Sigmoid colon (tissue), 7 donors: ENCODE measurements at regions of chr9 and their contacts with region 1.

Region 1: DNA sequence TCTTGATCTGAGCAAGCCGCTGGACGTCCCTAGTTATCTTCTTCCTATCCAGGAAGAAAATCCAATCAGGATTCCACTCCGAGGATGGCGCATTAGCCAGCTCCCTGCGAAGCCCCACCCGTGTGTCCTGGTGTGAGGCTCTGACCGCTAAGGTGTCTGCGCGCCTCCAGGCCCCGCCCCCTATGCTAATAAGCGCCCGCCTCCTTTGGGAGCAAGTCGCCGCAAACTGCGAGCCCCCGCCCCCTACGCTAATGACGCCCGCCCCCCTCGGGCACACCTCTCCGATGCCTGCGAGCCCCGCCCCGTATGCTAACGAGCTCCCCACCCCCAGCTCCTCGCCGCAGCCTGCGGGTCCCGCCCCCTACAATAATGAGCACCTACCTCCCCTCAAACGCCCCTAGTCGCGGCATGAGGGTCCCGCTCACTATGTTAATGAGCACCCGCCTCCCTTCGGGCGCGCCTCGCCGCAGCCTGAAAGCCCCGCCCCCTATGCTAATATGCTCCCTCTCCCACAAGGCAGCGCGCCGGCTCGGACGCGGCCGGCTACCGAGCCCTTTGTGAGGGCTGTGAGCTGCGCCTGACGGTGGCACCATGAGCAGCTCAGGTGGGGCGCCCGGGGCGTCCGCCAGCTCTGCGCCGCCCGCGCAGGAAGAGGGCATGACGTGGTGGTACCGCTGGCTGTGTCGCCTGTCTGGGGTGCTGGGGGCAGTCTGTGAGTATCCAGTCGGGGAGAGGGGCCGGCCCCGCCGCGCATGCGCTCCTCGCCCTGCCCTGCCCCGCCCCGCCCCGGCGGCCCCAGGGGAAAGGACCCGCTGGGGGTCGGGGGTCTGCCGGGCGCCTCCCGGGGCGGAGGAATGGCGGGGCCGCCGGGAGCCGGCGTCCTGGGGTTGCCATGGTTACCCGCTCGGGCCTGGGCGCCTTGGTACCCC is at the start of gene CACFD1:
- DNase-seq: peak; percentile 99
- H3K4me3 ChIP-seq: peak within 1 kb of the TSS; percentile 66 to 91 (median 84)
- H3K27ac ChIP-seq: peak within 1 kb of the TSS; percentile 92 to 97 (median 95)
- H3K4me1 ChIP-seq: peaks cover 0 to 21% (median 18%) of the 10 kb centered on the region in 4 donors
- H3K27me3 ChIP-seq: no peaks in the 10 kb centered on the region
- CTCF ChIP-seq: no peak
- EP300 ChIP-seq: no peak
- POLR2A ChIP-seq: peak; percentile 81 to 88
- total RNA-seq, gene CACFD1: 6.7 to 13.4 (median 8.9) TPM

Region 2: DNA sequence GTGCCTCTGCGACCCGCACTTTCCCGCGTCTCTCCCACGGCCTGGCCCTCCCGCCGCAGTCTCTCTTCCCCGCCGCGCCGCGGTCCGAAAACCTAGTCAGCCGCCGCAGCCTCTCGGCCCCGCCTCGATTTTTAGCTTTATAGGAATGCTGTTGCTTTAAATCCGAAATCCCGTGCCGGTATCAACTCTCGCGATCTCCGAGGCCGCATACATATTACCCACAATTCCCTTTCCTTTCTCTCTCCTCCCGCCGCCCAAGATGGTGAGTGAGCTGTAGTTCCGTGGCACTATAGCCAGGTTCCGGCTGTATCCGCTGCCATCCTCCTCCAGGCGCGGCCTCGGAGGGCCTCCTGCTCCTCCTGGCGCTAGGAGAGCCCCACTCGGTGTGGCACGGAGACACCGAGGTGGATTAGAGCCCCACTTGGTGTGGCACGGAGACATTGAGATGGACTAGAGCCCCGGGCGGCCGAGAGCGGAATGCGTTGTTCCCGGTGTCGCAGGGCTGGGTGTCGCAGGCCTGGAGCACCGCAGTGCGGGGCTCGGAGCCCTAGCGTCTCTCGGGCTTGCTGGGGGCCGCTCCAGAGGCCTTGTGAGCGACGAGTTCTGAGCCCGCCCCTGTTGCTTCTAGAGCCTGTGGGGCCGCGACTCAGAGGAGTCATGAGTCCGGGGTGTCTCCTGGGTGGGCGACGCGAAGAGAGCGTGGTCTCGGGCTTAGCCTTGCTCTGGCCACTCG is 111.6 kb before region 1 on chr9 and contains the starts of genes MED22 and RPL7A:
- intact Hi-C with region 1: loop called (anchors 5 kb)
- DNase-seq: peak; percentile 97
- H3K4me3 ChIP-seq: peak within 1 kb of the TSS; percentile 78 to 96 (median 88)
- H3K27ac ChIP-seq: peak within 1 kb of the TSS; percentile 90 to 93 (median 92)
- H3K4me1 ChIP-seq: peaks cover 0 to 31% (median 27%) of the 10 kb centered on the region in 4 donors
- H3K27me3 ChIP-seq: no peaks in the 10 kb centered on the region
- CTCF ChIP-seq: no peak
- EP300 ChIP-seq: no peak
- POLR2A ChIP-seq: peak; percentile 90 to 92
- total RNA-seq, gene MED22: 17.2 to 31.3 (median 28.4) TPM
- total RNA-seq, gene RPL7A: 2,027 to 2,561 (median 2,271) TPM

Region 3: GRCh38 chr9:133417541-133418461 is 41.9 kb before region 1 on chr9 and contains the start of gene REXO4:
- intact Hi-C with region 1: loop called (anchors 2 kb)
- DNase-seq: peak; percentile 90
- H3K4me3 ChIP-seq: peak within 1 kb of the TSS; percentile 65 to 88 (median 71)
- H3K27ac ChIP-seq: peak within 1 kb of the TSS; percentile 81 to 87 (median 84)
- H3K4me1 ChIP-seq: peaks cover 0 to 31% (median 23%) of the 10 kb centered on the region in 4 donors
- H3K27me3 ChIP-seq: no peaks in the 10 kb centered on the region
- CTCF ChIP-seq: no peak
- EP300 ChIP-seq: no peak
- POLR2A ChIP-seq: no peak
- total RNA-seq, gene REXO4: 16.3 to 22.2 (median 18.8) TPM

Region 4: GRCh38 chr9:133478851-133479711 is 19.3 kb after region 1 on chr9 and contains the start of gene SLC2A6:
- intact Hi-C with region 1: loop called (anchors 2 kb)
- DNase-seq: peak; percentile 92
- H3K4me3 ChIP-seq: peak within 1 kb of the TSS; percentile 26 to 64 (median 50)
- H3K27ac ChIP-seq: peak within 1 kb of the TSS; percentile 44 to 71 (median 52)
- H3K4me1 ChIP-seq: peaks cover 0 to 22% (median 17%) of the 10 kb centered on the region in 4 donors
- H3K27me3 ChIP-seq: no peaks in the 10 kb centered on the region
- CTCF ChIP-seq: no peak
- EP300 ChIP-seq: no peak
- POLR2A ChIP-seq: no peak
- total RNA-seq, gene SLC2A6: 1.4 to 2.7 (median 2.0) TPM

Region 5: GRCh38 chr9:134536101-134536900 is 1076.6 kb after region 1 on chr9:
- intact Hi-C with region 1: no loop called
- DNase-seq: no peak
- H3K4me3 ChIP-seq: no peak overlapping the region
- H3K27ac ChIP-seq: peak overlapping the region in 1 of 4 donors; percentile 0
- H3K4me1 ChIP-seq: peaks cover 0 to 47% (median 34%) of the 10 kb centered on the region in 4 donors
- H3K27me3 ChIP-seq: no peaks in the 10 kb centered on the region
- CTCF ChIP-seq: no peak
- EP300 ChIP-seq: no peak
- POLR2A ChIP-seq: no peak